Activated CD4-positive, alpha-beta T cell treated with anti-CD3 and anti-CD28 coated beads for 36 hours (primary cell): ENCODE measurements at regions of chr13 and their contacts with region 1.

Region 1: GRCh38 chr13:28636674-28637317 is 22.1 kb upstream of the POMP start:
- DNase-seq: peak; percentile 75
- ATAC-seq: peak; percentile 92
- H3K4me3 Mint-ChIP-seq: peak overlapping the region; percentile 0
- H3K27ac Mint-ChIP-seq: no peak overlapping the region
- H3K4me1 Mint-ChIP-seq: peaks cover 12% of the 10 kb centered on the region
- H3K27me3 Mint-ChIP-seq: peaks cover 16% of the 10 kb centered on the region

Region 2: DNA sequence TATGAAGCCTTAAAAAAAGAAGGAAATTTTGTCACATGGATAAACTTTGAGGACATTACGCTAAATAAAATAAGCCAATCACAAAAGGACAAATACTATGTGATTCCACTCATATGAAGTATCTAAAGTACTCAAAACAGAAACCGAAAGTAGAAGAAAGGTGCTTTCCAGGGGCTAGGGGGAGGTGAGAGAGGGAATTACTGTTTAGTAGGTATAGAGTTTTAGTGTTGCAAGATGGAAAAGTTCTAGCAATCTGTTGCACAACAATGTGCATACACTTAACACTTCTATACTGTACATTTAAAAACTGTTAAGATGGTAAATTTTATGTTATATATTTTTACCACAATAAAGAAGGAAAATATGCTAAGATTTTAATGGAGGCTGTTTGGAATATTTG is 932.1 kb before region 1 on chr13:
- CTCF ChIA-PET with region 1: no interaction called
- POLR2A ChIA-PET with region 1: no interaction called
- intact Hi-C with region 1: no loop called
- DNase-seq: no peak
- ATAC-seq: peak; percentile 60
- H3K4me3 Mint-ChIP-seq: no peak overlapping the region
- H3K27ac Mint-ChIP-seq: no peak overlapping the region
- H3K4me1 Mint-ChIP-seq: peaks cover 3% of the 10 kb centered on the region
- H3K27me3 Mint-ChIP-seq: peaks cover 8% of the 10 kb centered on the region

Region 3: DNA sequence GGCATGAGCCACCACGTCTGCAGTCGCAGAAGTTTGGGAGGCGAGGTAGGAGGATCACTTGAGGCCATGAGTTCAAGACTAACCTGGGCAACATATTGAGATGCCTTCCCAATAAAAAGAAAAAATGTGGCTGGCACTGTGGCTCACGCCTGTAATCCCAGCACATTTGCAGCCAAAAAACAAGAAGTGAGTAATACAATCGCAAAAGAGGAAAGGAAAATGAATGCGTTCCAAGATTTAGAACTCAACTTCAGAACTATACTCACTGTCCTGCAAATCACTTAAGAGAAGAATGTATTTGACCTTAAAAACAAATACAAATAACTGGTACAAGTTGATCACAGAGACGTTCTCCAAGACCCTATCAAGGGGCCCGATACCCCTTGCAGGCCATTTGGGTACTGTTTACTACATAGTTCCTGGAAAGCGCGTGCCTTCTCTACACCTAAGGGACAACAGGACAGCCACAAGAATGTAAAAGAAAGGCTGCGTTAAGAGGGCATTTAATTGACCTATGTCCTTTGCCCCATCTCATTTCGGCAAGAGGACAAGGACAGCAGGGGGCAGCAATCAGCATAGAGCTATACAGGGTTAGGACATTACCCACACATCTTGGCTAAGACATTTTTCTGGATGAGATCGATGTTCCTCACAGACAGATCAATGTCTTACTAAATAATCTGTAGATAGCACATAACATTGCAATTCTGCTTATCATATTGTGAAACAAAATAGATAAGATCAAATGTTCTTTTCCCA is 577.8 kb before region 1 on chr13:
- CTCF ChIA-PET with region 1: no interaction called
- POLR2A ChIA-PET with region 1: no interaction called
- intact Hi-C with region 1: loop called (anchors 5 to 10 kb)
- DNase-seq: peak; percentile 72
- ATAC-seq: peak; percentile 55
- H3K4me3 Mint-ChIP-seq: no peak overlapping the region
- H3K27ac Mint-ChIP-seq: no peak overlapping the region
- H3K4me1 Mint-ChIP-seq: no peaks in the 10 kb centered on the region
- H3K27me3 Mint-ChIP-seq: peaks cover 18% of the 10 kb centered on the region

Region 4: DNA sequence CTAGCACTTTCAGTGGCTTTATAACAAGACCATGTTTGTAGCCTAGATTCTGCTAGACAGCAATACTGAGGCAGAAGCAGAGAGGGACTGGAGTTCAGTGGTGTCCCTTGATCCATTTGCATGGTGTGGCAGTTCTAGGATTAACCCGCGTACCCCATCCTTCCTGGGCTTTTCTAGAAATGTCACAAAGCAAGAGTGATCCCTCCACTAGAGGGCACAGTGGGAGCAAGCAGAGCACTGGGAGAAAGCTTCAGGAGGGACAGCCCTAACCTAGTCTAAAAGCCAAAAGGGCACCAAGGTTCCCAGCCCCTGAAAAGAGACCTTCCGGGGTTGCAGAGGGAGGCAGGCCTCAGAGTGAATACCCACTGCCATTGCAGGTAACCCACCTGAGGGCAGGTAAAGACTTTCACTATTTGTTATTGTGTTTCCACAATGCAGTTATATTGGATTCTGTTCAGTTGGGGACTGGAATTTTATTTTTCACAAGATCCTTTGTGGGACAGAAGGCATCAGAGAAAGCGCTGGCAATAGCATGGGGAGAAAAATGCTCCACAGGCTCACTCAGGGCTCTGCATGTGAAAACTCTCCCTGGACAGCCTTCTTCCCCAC is 312.5 kb before region 1 on chr13:
- CTCF ChIA-PET with region 1: interaction called, 6 read pairs
- POLR2A ChIA-PET with region 1: no interaction called
- intact Hi-C with region 1: loop called (anchors 1 kb)
- DNase-seq: peak; percentile 74
- ATAC-seq: peak; percentile 78
- H3K4me3 Mint-ChIP-seq: no peak overlapping the region
- H3K27ac Mint-ChIP-seq: no peak overlapping the region
- H3K4me1 Mint-ChIP-seq: peaks cover 3% of the 10 kb centered on the region
- H3K27me3 Mint-ChIP-seq: no peaks in the 10 kb centered on the region

Region 5: GRCh38 chr13:28449826-28450773 is 186.7 kb before region 1 on chr13:
- CTCF ChIA-PET with region 1: no interaction called
- POLR2A ChIA-PET with region 1: no interaction called
- intact Hi-C with region 1: no loop called
- DNase-seq: no peak
- ATAC-seq: no peak
- H3K4me3 Mint-ChIP-seq: no peak overlapping the region
- H3K27ac Mint-ChIP-seq: no peak overlapping the region
- H3K4me1 Mint-ChIP-seq: no peaks in the 10 kb centered on the region
- H3K27me3 Mint-ChIP-seq: peaks cover 2% of the 10 kb centered on the region

Region 6: GRCh38 chr13:28494776-28495537 is 141.8 kb before region 1 on chr13 and contains the start of gene FLT1:
- CTCF ChIA-PET with region 1: no interaction called
- POLR2A ChIA-PET with region 1: no interaction called
- intact Hi-C with region 1: loop called (anchors 1 to 2 kb)
- DNase-seq: peak; percentile 69
- ATAC-seq: peak; percentile 55
- H3K4me3 Mint-ChIP-seq: peak within 1 kb of the TSS; percentile 76
- H3K27ac Mint-ChIP-seq: peak within 1 kb of the TSS; percentile 22
- H3K4me1 Mint-ChIP-seq: peaks cover 23% of the 10 kb centered on the region
- H3K27me3 Mint-ChIP-seq: peaks cover 35% of the 10 kb centered on the region
- total RNA-seq, gene FLT1: 21.7 to 27.4 TPM

Region 7: DNA sequence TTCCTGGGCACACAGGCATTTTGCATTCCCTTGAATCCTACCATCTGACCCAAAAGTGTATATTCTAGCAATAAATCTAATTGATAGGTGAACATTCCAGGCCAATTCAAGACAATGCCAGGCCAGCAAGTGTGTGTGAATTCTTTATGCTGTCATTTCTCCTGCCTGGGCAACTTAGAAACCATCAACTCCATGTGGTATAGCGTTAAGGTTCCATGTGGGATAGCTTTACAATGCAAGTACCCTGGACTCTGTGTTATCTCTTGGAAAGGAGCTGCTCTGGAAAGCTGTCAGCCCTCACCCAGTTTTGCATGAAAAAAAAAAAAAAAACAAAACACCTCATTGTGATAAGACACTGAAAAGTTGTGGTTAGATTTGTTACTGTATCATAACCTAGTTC is 126.3 kb before region 1 on chr13:
- CTCF ChIA-PET with region 1: no interaction called
- POLR2A ChIA-PET with region 1: no interaction called
- intact Hi-C with region 1: no loop called
- DNase-seq: no peak
- ATAC-seq: no peak
- H3K4me3 Mint-ChIP-seq: no peak overlapping the region
- H3K27ac Mint-ChIP-seq: no peak overlapping the region
- H3K4me1 Mint-ChIP-seq: peaks cover 5% of the 10 kb centered on the region
- H3K27me3 Mint-ChIP-seq: peaks cover 7% of the 10 kb centered on the region

Region 8: DNA sequence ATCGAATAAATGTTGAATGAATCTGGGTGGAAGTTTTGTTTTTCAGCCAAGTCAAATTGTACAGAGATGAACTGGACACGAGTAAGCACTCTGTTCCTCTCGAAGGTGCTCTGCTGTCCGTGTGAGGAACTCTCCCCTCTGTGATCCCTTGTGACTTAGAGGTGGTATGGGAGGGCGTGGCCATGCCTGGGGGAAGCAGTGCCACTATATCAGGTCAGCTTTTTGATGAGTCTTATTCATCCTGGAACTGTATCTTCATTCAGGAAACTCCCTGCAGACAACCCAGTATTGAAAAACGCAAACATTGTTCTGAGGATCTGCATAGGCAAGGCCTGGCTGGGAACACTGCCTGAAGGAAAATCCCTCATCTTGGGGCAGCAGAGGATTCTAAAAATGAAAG is 96.2 kb before region 1 on chr13:
- CTCF ChIA-PET with region 1: no interaction called
- POLR2A ChIA-PET with region 1: no interaction called
- intact Hi-C with region 1: loop called in 1 of 2 experiments (anchors 5 kb)
- DNase-seq: peak; percentile 56
- ATAC-seq: peak; percentile 62
- H3K4me3 Mint-ChIP-seq: peak overlapping the region; percentile 6
- H3K27ac Mint-ChIP-seq: peak overlapping the region; percentile 83
- H3K4me1 Mint-ChIP-seq: peaks cover 41% of the 10 kb centered on the region
- H3K27me3 Mint-ChIP-seq: peaks cover 25% of the 10 kb centered on the region